PC-9 (cell line): ENCODE measurements at regions of chr6 and their contacts with region 1.

Region 1: GRCh38 chr6:19682859-19683258 is 154.3 kb upstream of the ID4 start:
- DNase-seq: no peak
- H3K4me3 ChIP-seq: no peak overlapping the region
- H3K27ac ChIP-seq: no peak overlapping the region
- H3K4me1 ChIP-seq: no peaks in the 10 kb centered on the region
- H3K27me3 ChIP-seq: no peaks in the 10 kb centered on the region
- CTCF ChIP-seq: no peak

Region 2: DNA sequence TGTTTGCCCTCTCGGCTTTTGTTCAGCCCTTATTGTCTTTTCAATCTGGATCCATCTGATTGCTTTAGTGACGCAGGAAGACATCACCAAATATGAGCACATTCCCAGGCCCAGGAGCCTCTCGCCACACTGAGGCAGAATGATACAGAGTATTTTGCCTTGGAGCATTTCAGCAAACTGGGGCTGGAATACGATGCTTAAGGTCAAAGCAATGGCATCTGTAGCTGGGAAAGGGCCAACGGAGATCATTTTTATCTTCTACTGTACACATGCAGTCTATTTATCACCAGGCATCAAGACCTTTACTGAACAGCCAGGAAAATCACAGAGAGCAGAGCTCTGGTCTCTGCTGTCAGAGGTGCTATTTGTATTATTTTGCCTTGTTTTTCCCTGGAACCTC is 640.4 kb before region 1 on chr6:
- CTCF ChIA-PET with region 1: no interaction called
- POLR2A ChIA-PET with region 1: interaction called, 20 read pairs
- intact Hi-C with region 1: no loop called
- DNase-seq: no peak
- H3K4me3 ChIP-seq: no peak overlapping the region
- H3K27ac ChIP-seq: no peak overlapping the region
- H3K4me1 ChIP-seq: no peaks in the 10 kb centered on the region
- H3K27me3 ChIP-seq: no peaks in the 10 kb centered on the region
- CTCF ChIP-seq: no peak

Region 3: DNA sequence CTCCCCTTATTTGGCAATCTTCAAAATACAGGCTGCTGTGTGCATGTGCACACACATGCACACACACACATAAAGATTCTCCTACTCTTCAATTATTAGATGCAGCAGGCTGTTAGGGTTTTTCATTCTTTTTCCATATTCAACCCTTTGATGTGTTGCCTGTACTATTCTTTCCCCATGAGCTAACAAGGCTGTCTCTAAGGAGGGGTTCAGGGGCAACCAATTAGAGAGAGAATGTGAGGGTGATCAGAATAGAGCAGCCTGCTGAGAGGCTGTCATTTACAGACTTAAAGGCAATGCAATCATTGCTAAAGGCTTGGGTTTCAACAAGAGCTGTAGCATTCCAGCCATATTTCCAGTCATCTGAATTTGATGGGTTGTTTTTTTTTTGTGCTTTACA is 313.1 kb before region 1 on chr6:
- CTCF ChIA-PET with region 1: no interaction called
- POLR2A ChIA-PET with region 1: no interaction called
- intact Hi-C with region 1: no loop called
- DNase-seq: no peak
- H3K4me3 ChIP-seq: no peak overlapping the region
- H3K27ac ChIP-seq: no peak overlapping the region
- H3K4me1 ChIP-seq: 0 out of 2 replicates have a peak, but pooled peaks cover 4% of the 10 kb centered on the region
- H3K27me3 ChIP-seq: no peaks in the 10 kb centered on the region
- CTCF ChIP-seq: no peak